Activated naive CD8-positive, alpha-beta T cell treated with anti-CD3 and anti-CD28 coated beads, Interleukin-2, amount 10 ng/mL, durations not matched to agents 7 days and 5 days (primary cell): ENCODE measurements at regions of chr16 and their contacts with region 1.

Region 1: DNA sequence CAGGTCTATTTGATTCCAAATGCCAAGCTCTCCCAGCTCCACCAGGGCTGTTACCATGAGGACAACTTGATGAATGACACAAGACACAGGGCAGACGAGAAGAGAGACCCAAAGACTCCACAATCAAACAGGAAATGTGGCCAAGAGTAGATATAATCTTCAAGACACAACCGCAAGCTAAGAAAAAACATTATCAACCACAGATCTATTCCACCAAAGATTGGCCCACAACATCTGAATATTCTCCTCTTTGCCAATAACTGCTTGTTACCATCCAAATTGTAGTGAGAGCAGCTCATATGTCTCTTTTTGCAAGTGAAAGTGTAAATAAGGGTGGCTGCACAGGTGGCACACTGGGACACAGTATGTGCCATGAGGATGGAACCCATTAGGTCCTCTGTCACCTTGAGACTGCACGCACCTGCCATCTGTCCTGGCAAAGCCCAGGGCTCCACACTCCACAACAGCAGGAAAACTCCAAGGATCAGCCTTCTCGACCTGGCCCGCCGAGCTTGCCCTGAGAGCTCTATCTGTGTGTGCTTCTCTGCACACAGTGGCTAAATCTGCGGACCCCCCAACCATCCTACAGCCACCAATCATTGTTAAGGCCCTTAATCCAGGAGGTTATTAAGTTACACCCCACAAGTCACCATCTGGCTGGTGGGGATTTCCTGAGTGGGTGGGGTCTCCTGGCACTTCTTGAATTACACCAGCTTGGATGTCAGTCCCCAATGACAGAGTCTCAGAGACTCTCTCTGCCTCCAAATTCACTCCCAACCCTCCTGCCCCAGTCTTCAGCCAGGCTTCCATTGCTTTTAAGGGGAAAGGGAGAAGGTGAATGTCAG is 50.5 kb downstream of the DYNLRB2 start:
- DNase-seq: peak; percentile 51
- ATAC-seq: peak; percentile 91
- H3K4me3 Mint-ChIP-seq: peak overlapping the region; percentile 43
- H3K27ac Mint-ChIP-seq: peak overlapping the region; percentile 62
- H3K4me1 Mint-ChIP-seq: peaks cover 19% of the 10 kb centered on the region
- H3K27me3 Mint-ChIP-seq: peaks cover 53% of the 10 kb centered on the region

Region 2: GRCh38 chr16:80518436-80518835 is 72.9 kb before region 1 on chr16:
- POLR2A ChIA-PET with region 1: no interaction called
- DNase-seq: no peak
- ATAC-seq: peak; percentile 52
- H3K4me3 Mint-ChIP-seq: no peak overlapping the region
- H3K27ac Mint-ChIP-seq: no peak overlapping the region
- H3K4me1 Mint-ChIP-seq: peaks cover 15% of the 10 kb centered on the region
- H3K27me3 Mint-ChIP-seq: peaks cover 2% of the 10 kb centered on the region

Region 3: GRCh38 chr16:80580109-80580832 is 11.0 kb before region 1 on chr16:
- POLR2A ChIA-PET with region 1: interaction called, 37 read pairs
- DNase-seq: peak; percentile 64
- ATAC-seq: peak; percentile 92
- H3K4me3 Mint-ChIP-seq: peak overlapping the region; percentile 85
- H3K27ac Mint-ChIP-seq: peak overlapping the region; percentile 98
- H3K4me1 Mint-ChIP-seq: peaks cover 40% of the 10 kb centered on the region
- H3K27me3 Mint-ChIP-seq: peaks cover 8% of the 10 kb centered on the region